ENCODE measurements at regions of chr2 and their contacts with region 1.

Region 1: GRCh38 chr2:110134025-110134424 is 18.4 kb upstream of the MALL start:
- DNase-seq: no peak
- ATAC-seq: peak; percentile 86
- H3K4me3 Mint-ChIP-seq: no peak overlapping the region
- H3K27ac Mint-ChIP-seq: peak overlapping the region; percentile 63
- H3K4me1 Mint-ChIP-seq: peaks cover 36% of the 10 kb centered on the region
- H3K27me3 Mint-ChIP-seq: peaks cover 2% of the 10 kb centered on the region

Region 2: GRCh38 chr2:109376115-109376514 is 757.9 kb before region 1 on chr2:
- CTCF ChIA-PET with region 1: no interaction called
- POLR2A ChIA-PET with region 1: no interaction called
- intact Hi-C with region 1: no loop called
- DNase-seq: no peak
- ATAC-seq: no peak
- H3K4me3 Mint-ChIP-seq: no peak overlapping the region
- H3K27ac Mint-ChIP-seq: no peak overlapping the region
- H3K4me1 Mint-ChIP-seq: no peaks in the 10 kb centered on the region
- H3K27me3 Mint-ChIP-seq: no peaks in the 10 kb centered on the region

Region 3: DNA sequence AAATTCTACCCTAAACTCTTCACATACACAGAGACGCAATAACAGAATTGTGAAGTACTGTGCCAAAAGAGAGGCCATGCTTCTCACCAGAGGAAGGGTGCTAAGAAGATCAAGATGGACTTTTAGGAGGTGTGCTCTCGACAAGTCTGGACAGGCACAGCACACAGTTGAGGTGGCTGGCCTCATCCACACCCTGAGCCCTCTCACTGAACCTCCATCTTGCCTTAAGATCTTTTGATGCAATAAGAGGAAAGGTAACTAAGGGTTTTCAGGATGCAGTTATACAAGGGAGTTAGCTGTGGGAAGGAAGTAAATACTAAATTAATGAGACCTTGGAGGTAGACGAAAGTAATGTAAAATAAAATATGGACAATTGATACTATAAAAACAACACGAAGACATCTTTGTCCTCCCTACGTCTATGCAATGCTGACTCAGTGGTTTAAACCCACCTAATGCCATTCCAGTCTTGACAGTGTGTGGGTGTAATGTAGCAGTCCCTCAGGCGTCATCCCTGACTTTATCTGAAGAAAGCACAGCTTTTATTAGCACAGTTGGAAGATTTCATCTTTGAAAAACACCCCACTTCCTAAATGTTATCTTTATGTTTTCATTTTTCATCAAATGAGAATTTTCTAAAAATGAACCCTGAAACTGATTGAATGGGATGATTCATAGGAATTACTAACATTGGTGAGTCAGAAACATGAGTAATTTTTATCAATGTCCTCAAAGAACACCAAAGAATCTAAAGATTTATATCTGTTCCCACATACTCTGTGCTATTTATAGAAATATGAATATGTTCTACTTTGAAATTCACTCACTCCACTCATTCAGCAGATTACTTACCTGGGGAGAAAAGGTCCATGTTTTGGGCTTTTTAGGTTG is 15.6 kb after region 1 on chr2:
- CTCF ChIA-PET with region 1: interaction called, 4 read pairs
- POLR2A ChIA-PET with region 1: no interaction called
- intact Hi-C with region 1: loop called (anchors 1 kb)
- DNase-seq: no peak
- ATAC-seq: peak; percentile 80
- H3K4me3 Mint-ChIP-seq: no peak overlapping the region
- H3K27ac Mint-ChIP-seq: peak overlapping the region; percentile 87
- H3K4me1 Mint-ChIP-seq: peaks cover 62% of the 10 kb centered on the region
- H3K27me3 Mint-ChIP-seq: peaks cover 2% of the 10 kb centered on the region